ENCODE measurements at regions of chr9 and their contacts with region 1.

Region 1: DNA sequence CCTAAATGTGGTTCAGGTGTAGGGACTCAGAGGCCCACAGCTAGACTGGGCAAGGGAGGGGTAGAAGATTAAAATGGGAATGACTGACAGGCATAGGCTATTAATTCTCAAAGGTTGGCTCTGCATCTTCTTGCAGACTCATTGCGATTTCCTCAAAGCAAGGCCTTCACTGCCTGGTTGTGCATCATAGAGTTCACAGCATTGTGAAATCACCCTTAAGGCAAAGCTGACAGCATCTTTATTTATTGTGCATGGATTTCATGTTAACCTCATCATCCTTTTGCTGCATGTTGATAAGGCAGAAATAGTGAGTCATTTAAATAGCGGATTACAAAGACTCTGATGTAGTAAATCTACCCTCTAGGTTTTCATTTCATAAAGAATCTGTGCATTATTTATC is 13.7 kb upstream of the PALM2AKAP2 start:
- DNase-seq: peak; percentile 98
- ATAC-seq: peak; percentile 78
- H3K4me3 ChIP-seq: no peak overlapping the region
- H3K27ac ChIP-seq: peak overlapping the region; percentile 33; the same call in 1 of the 2 replicates
- H3K4me1 ChIP-seq: peaks cover 26% of the 10 kb centered on the region
- H3K27me3 ChIP-seq: no peaks in the 10 kb centered on the region
- CTCF ChIP-seq: no peak
- POLR2A ChIP-seq: no peak
- RAD21 ChIP-seq: 0 out of 2 replicates have a peak, but pooled peaks have one; percentile 18

Region 2: GRCh38 chr9:109251080-109251775 is 515.1 kb before region 1 on chr9:
- CTCF ChIA-PET with region 1: no interaction called
- POLR2A ChIA-PET with region 1: no interaction called
- dilution Hi-C with region 1: no loop called
- in situ Hi-C with region 1: no loop called
- intact Hi-C with region 1: no loop called
- DNase-seq: peak; percentile 65
- ATAC-seq: peak; percentile 55
- H3K4me3 ChIP-seq: no peak overlapping the region
- H3K27ac ChIP-seq: peak overlapping the region; percentile 61
- H3K4me1 ChIP-seq: peaks cover 27% of the 10 kb centered on the region
- H3K27me3 ChIP-seq: no peaks in the 10 kb centered on the region
- CTCF ChIP-seq: no peak
- POLR2A ChIP-seq: no peak
- RAD21 ChIP-seq: no peak

Region 3: GRCh38 chr9:109627041-109627440 is 139.3 kb before region 1 on chr9:
- CTCF ChIA-PET with region 1: no interaction called
- POLR2A ChIA-PET with region 1: no interaction called
- dilution Hi-C with region 1: no loop called
- in situ Hi-C with region 1: no loop called
- intact Hi-C with region 1: no loop called
- DNase-seq: no peak
- ATAC-seq: no peak
- H3K4me3 ChIP-seq: no peak overlapping the region
- H3K27ac ChIP-seq: no peak overlapping the region
- H3K4me1 ChIP-seq: no peaks in the 10 kb centered on the region
- H3K27me3 ChIP-seq: peaks cover 21% of the 10 kb centered on the region
- CTCF ChIP-seq: no peak
- POLR2A ChIP-seq: no peak
- RAD21 ChIP-seq: no peak

Region 4: GRCh38 chr9:109880277-109881169 is 114.2 kb after region 1 on chr9:
- CTCF ChIA-PET with region 1: no interaction called
- POLR2A ChIA-PET with region 1: no interaction called
- dilution Hi-C with region 1: no loop called
- in situ Hi-C with region 1: no loop called
- intact Hi-C with region 1: loop called (anchors 10 kb)
- DNase-seq: peak; percentile 41
- ATAC-seq: peak; percentile 71
- H3K4me3 ChIP-seq: no peak overlapping the region
- H3K27ac ChIP-seq: no peak overlapping the region
- H3K4me1 ChIP-seq: no peaks in the 10 kb centered on the region
- H3K27me3 ChIP-seq: no peaks in the 10 kb centered on the region
- CTCF ChIP-seq: peak; percentile 56
- POLR2A ChIP-seq: no peak
- RAD21 ChIP-seq: peak; percentile 44